ENCODE measurements at regions of chr15 and their contacts with region 1.

Region 1: DNA sequence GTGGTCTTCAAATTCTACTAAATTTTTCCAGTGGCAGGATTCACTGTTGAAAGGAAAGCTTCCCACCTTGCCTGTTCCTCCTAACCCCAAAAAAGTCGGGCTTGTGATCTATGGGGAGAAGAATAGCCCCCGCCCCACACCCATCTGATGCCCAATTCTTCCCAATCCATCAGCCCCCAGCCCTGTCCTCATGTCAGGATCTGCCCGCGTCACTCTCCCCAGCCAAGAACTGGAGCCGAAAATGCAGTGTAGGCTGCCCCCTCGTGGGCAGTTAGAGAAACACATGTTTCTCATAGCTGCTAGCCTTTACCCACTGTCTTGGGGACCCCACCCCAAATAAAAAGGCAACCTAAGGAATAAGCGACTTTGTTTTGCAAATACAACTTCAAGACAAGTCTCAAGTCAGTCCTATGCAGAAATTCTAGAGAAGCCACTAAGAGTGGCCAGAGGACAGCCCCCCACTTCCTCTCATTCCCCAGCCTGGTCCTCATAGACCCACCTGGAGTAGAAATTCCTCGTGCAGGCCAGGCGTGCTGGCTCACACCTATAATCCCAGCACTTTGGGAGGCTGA is 13.0 kb upstream of the CSK start:
- DNase-seq: peak; percentile 50
- H3K4me3 ChIP-seq: no peak overlapping the region
- H3K27ac ChIP-seq: no peak overlapping the region
- H3K4me1 ChIP-seq: peaks cover 16% of the 10 kb centered on the region
- H3K27me3 ChIP-seq: peaks cover 7% of the 10 kb centered on the region
- CTCF ChIP-seq: peak; percentile 84

Region 2: GRCh38 chr15:74373731-74374647 is 394.9 kb before region 1 on chr15:
- intact Hi-C with region 1: loop called (anchors 5 kb)
- DNase-seq: peak; percentile 94
- H3K4me3 ChIP-seq: peak overlapping the region; percentile 77
- H3K27ac ChIP-seq: no peak overlapping the region
- H3K4me1 ChIP-seq: peaks cover 19% of the 10 kb centered on the region
- H3K27me3 ChIP-seq: peaks cover 19% of the 10 kb centered on the region
- CTCF ChIP-seq: peak; percentile 92

Region 3: DNA sequence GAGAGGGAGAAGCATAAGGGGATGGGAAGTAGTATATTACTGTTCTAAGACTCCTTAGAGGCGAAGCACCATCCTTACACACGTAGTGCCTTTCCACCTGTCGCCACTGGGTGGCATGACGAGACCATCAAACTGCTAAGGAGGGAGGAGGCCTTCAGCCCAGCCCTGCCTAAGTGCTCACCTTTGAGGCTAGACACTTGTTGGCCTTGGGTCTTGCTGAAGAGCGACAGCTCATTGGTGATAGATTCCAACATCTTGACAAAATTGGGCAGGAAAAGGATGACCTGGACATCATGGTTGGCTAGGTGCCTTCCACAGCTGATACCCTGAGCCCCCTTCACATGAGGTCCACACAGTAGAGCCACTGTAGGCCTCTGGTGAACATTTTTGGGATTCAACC is 133.6 kb before region 1 on chr15:
- intact Hi-C with region 1: loop called (anchors 5 kb)
- DNase-seq: peak; percentile 44
- H3K4me3 ChIP-seq: no peak overlapping the region
- H3K27ac ChIP-seq: no peak overlapping the region
- H3K4me1 ChIP-seq: peaks cover 3% of the 10 kb centered on the region
- H3K27me3 ChIP-seq: no peaks in the 10 kb centered on the region
- CTCF ChIP-seq: peak; percentile 90

Region 4: GRCh38 chr15:74948795-74949194 is 179.9 kb after region 1 on chr15:
- intact Hi-C with region 1: loop called (anchors 5 kb)
- DNase-seq: no peak
- H3K4me3 ChIP-seq: no peak overlapping the region
- H3K27ac ChIP-seq: no peak overlapping the region
- H3K4me1 ChIP-seq: peaks cover 3% of the 10 kb centered on the region
- H3K27me3 ChIP-seq: no peaks in the 10 kb centered on the region
- CTCF ChIP-seq: no peak